ENCODE measurements at regions of chr20 and their contacts with region 1.

Region 1: DNA sequence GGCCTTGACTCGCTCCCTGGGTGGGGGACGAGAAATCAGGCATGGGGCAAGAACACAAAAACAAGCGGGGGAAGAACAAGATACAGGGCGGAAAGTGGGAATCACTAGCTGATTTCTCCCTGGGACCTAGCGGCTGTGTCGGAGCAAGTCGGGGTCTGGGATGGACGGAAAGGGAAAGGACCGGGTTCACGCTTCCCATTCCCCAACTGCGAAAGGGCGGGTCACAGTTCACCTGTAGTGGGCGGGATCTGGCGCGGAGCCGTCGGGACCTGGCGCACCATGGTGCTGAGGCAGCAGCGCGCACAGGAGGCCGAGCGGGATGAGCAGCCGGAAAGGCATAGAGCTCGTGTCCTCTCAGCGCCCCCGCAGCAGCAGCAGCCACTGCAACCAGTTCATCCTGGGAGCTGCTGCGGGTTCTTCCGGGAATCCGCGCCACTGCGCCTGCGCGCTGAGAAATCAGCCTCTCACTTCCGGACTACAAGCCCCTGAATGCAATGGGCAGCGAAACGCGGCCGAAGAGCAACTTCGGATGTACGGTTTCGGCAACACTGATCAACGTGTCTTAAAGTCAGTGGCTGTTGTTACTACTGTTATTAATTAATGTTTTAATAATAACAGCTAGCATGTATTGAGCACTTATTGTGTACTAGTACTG is at the start of gene EDEM2:
- DNase-seq: peak; percentile 48
- H3K4me3 ChIP-seq: peak within 1 kb of the TSS; percentile 62 to 75 (median 72)
- H3K27ac ChIP-seq: peak within 1 kb of the TSS; percentile 84 to 91 (median 90)
- H3K4me1 ChIP-seq: peaks cover 8 to 43% (median 11%) of the 10 kb centered on the region in 3 donors
- H3K27me3 ChIP-seq: no peaks in the 10 kb centered on the region
- CTCF ChIP-seq: peak in 1 of 6 experiments; percentile 26
- POLR2A ChIP-seq: peak in 2 of 4 donors; percentile 51 to 67
- total RNA-seq, gene EDEM2: 12.5 to 17.5 (median 14.6) TPM

Region 2: GRCh38 chr20:34861386-34862084 is 285.5 kb before region 1 on chr20:
- intact Hi-C with region 1: no loop called
- DNase-seq: no peak
- H3K4me3 ChIP-seq: no peak overlapping the region
- H3K27ac ChIP-seq: no peak overlapping the region
- H3K4me1 ChIP-seq: peaks cover 0 to 9% (median 0%) of the 10 kb centered on the region in 3 donors
- H3K27me3 ChIP-seq: no peaks in the 10 kb centered on the region
- CTCF ChIP-seq: no peak
- POLR2A ChIP-seq: no peak

Region 3: GRCh38 chr20:35207950-35208611 is 61.0 kb after region 1 on chr20:
- intact Hi-C with region 1: loop called (anchors 5 kb)
- DNase-seq: no peak
- H3K4me3 ChIP-seq: peak overlapping the region in 3 of 4 donors; percentile 4 to 41 (median 15)
- H3K27ac ChIP-seq: peak overlapping the region in 3 of 4 donors; percentile 62 to 76 (median 71)
- H3K4me1 ChIP-seq: peaks cover 0 to 15% (median 2%) of the 10 kb centered on the region in 3 donors
- H3K27me3 ChIP-seq: no peaks in the 10 kb centered on the region
- CTCF ChIP-seq: peak; percentile 59 to 90 (median 82)
- POLR2A ChIP-seq: no peak